ENCODE measurements at regions of chr2 and their contacts with region 1.

Region 1: DNA sequence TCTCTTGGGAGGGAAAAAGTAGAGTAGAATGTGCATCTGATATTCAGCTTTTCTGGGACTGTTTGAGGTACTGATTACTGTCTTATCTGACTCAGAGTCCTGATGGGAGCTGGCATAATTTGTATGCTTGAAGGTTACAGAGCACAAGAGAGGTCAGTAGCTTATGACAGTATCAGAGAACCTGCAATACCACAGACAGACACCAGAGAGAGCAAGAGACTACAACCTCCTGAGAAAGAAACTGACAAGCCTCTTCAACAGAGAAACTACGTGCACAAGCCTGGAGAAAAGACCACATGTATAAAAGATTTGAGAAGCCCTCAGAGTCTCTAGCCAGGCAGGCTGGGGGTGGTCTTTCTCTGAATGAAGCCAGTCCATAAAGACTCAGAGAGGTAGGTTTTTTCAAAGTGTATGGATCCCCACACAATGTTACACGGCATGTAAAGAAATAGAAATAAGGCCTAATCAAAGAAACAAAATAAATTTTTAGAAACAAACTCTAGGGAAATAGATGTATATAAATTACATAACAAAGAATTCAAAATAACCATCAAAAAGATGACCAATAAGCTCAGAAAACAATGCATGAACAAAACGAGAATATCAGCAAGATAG is 568.3 kb downstream of the LRRTM4 start:
- DNase-seq: peak; percentile 68
- H3K4me3 Mint-ChIP-seq: no peak overlapping the region
- H3K27ac Mint-ChIP-seq: no peak overlapping the region
- H3K4me1 Mint-ChIP-seq: no peaks in the 10 kb centered on the region
- H3K27me3 Mint-ChIP-seq: peaks cover 69% of the 10 kb centered on the region
- CTCF ChIP-seq: peak; percentile 89

Region 2: DNA sequence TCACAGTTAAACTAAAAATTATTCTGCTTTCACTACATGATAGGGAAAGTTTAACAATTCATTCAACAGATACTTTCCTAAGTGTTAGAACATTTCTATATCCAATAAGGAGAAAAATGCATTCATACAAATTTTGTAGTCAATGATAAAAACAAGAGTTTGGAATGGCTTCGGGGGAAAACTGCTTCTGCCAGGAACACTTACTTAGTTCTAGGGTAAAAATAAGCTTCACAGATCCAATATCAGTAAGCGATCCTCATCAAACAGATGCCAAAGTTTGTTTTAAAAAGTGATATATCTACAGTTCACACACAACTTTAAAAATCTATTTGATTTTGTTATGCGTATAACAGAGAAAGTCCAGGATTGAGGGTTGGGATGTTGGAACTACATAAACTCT is 368.6 kb after region 1 on chr2:
- CTCF ChIA-PET with region 1: interaction called, 17 read pairs
- POLR2A ChIA-PET with region 1: no interaction called
- intact Hi-C with region 1: loop called (anchors 5 kb)
- DNase-seq: no peak
- H3K4me3 Mint-ChIP-seq: no peak overlapping the region
- H3K27ac Mint-ChIP-seq: no peak overlapping the region
- H3K4me1 Mint-ChIP-seq: no peaks in the 10 kb centered on the region
- H3K27me3 Mint-ChIP-seq: peaks cover 47% of the 10 kb centered on the region
- CTCF ChIP-seq: no peak

Region 3: GRCh38 chr2:77521931-77522470 is 568.2 kb after region 1 on chr2 and contains the start of gene LRRTM4:
- CTCF ChIA-PET with region 1: no interaction called
- POLR2A ChIA-PET with region 1: no interaction called
- intact Hi-C with region 1: loop called (anchors 5 kb)
- DNase-seq: peak; percentile 4
- H3K4me3 Mint-ChIP-seq: no peak within 1 kb of the TSS
- H3K27ac Mint-ChIP-seq: no peak within 1 kb of the TSS
- H3K4me1 Mint-ChIP-seq: no peaks in the 10 kb centered on the region
- H3K27me3 Mint-ChIP-seq: peaks cover 43% of the 10 kb centered on the region
- CTCF ChIP-seq: no peak
- total RNA-seq, gene LRRTM4: not detected in 2 replicates

Measured in MCF 10A (cell line).